Ovary (tissue), 10 donors: ENCODE measurements at regions of chr12 and their contacts with region 1.

Region 1: GRCh38 chr12:103978384-103978982 is 12.8 kb downstream of the TDG start:
- DNase-seq: no peak
- H3K4me3 ChIP-seq: no peak overlapping the region
- H3K27ac ChIP-seq: no peak overlapping the region
- H3K4me1 ChIP-seq: peaks cover 4% of the 10 kb centered on the region
- H3K27me3 ChIP-seq: no peaks in the 10 kb centered on the region
- CTCF ChIP-seq: no peak
- EP300 ChIP-seq: no peak
- POLR2A ChIP-seq: no peak

Region 2: DNA sequence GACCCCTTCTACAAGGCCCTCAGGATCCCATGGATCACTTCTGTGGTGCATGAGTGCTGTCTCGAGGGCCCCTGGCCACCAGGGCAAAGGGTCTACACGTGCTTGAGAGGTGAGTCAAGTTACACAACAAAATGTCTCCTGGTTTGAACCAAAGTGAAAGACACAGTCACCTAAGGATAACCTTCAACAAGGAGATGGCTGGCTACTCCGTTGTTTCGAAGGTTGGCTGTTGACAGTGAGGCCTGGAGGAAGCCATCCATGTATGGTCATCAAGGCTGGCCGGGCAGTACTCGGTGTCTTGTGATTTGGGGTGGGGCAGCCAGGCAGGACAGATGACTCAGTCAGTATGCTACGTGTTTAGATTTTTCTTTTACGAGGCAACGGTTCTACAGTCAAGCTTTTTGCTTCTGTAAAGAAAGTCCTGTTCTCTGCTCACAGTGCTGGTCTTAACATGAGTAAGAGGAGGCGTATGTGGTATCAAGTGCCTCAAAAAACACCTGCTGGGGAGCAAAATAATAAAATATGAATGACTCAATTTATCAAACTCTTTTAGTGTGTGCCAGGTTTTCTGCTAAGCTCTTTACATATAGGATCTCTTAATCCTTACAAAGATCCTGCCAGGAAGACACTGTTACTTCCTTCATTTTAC is 119.4 kb before region 1 on chr12:
- intact Hi-C with region 1: no loop called
- DNase-seq: peak in 4 of 5 donors; percentile 42 to 71 (median 68)
- H3K4me3 ChIP-seq: no peak overlapping the region
- H3K27ac ChIP-seq: no peak overlapping the region
- H3K4me1 ChIP-seq: peaks cover 6% of the 10 kb centered on the region
- H3K27me3 ChIP-seq: no peaks in the 10 kb centered on the region
- CTCF ChIP-seq: no peak
- EP300 ChIP-seq: peak; percentile 33
- POLR2A ChIP-seq: no peak

Region 3: DNA sequence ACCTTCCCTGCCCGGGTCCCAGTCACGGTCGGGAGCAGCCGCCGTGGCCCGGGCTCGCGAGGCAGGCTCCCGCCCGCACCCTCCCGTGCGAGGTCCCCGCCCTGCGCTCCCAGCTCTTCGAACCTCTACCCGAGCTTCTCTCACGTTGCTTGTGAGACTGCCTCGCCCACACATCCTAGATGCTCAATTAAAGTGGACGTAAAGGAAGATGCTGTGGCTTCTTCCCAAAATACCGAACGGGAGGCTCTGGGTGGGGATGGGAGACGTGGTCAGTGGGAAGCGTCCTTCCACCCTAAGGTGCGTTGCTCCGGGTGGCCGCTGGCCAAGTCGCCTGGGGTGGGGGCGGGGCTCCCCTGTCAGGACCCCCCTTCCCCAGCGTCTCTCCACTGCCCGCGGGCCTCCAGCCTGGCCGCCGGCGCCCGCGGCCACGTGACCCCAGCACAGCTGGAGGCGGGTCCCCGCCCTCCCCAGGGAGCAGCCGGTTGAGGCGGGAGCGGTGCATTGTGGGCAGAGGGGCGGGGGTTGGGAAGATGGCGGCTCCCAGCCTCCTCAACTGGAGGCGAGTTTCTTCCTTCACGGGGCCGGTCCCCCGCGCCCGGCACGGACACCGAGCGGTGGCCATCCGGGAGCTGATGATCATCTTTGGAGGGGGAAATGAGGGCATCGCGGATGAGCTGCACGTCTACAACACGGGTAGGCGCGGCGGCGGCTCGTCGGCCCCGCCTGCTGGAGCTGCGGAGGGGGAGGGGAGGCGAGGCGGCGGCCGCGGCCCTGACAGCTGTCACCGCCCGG is 85.7 kb after region 1 on chr12 and contains the start of gene HCFC2:
- intact Hi-C with region 1: loop called in 1 of 4 experiments (anchors 10 kb)
- DNase-seq: peak; percentile 90 to 94 (median 93)
- H3K4me3 ChIP-seq: peak within 1 kb of the TSS; percentile 82
- H3K27ac ChIP-seq: peak within 1 kb of the TSS; percentile 31 to 72
- H3K4me1 ChIP-seq: peaks cover 6% of the 10 kb centered on the region
- H3K27me3 ChIP-seq: no peaks in the 10 kb centered on the region
- CTCF ChIP-seq: no peak
- EP300 ChIP-seq: no peak
- POLR2A ChIP-seq: peak; percentile 59
- total RNA-seq, gene HCFC2: 17.2 to 24.6 (median 23.5) TPM

Region 4: GRCh38 chr12:104137238-104137912 is 158.9 kb after region 1 on chr12:
- intact Hi-C with region 1: no loop called
- DNase-seq: peak; percentile 35 to 66 (median 54)
- H3K4me3 ChIP-seq: peak overlapping the region; percentile 72
- H3K27ac ChIP-seq: peak overlapping the region; percentile 58 to 90
- H3K4me1 ChIP-seq: peaks cover 6% of the 10 kb centered on the region
- H3K27me3 ChIP-seq: no peaks in the 10 kb centered on the region
- CTCF ChIP-seq: no peak
- EP300 ChIP-seq: no peak
- POLR2A ChIP-seq: no peak

Region 5: DNA sequence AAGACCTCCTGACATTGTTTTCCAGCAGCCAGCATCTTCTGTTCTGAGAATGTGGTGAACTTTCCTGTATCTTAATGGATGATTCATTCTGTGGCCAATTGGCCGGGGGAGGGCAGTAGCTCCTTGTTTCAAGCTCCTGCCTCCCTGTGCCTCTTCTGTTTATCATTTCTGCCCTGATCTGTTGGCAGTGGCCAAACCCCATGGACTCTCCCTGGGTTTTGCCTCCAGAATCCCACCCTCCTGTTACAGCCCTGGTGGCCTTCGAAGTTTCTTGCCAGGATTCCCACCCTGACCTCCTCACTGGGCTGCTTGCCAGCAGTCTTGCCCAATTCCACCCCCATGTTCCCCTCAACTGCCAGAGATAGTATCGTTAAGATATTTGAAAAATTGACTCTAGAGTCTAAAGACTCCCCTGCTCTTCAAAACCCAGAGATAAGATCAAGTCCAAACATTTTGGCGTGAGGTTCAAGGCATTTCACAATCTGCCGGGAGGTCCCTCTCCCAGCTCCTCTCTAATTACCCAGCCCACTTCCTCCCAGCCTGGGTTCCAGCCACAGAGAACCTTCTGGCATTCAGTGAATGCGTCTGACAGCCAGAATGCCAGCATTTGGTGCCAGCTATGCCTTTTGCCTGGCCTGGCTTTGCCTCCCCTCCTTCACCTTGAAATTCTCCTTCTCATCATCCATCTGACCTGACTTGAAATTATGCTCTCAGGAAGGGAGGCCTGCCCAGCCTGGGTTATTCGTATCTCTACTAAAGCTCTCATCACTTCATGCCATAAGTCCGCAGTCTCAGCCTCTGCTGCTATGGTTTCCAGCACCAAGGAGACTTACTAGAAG is 199.4 kb after region 1 on chr12:
- intact Hi-C with region 1: no loop called
- DNase-seq: peak; percentile 68 to 90 (median 78)
- H3K4me3 ChIP-seq: no peak overlapping the region
- H3K27ac ChIP-seq: peak overlapping the region in 1 of 2 donors; percentile 43
- H3K4me1 ChIP-seq: peaks cover 8% of the 10 kb centered on the region
- H3K27me3 ChIP-seq: no peaks in the 10 kb centered on the region
- CTCF ChIP-seq: peak in 1 of 3 donors; percentile 15
- EP300 ChIP-seq: peak; percentile 92
- POLR2A ChIP-seq: no peak